ENCODE measurements at regions of chr18 and their contacts with region 1.

Region 1: GRCh38 chr18:59402432-59403090 is 43.5 kb upstream of the LMAN1 start:
- DNase-seq: peak; percentile 85
- H3K4me3 Mint-ChIP-seq: no peak overlapping the region
- H3K27ac Mint-ChIP-seq: no peak overlapping the region
- H3K4me1 Mint-ChIP-seq: no peaks in the 10 kb centered on the region
- H3K27me3 Mint-ChIP-seq: peaks cover 3% of the 10 kb centered on the region

Region 2: GRCh38 chr18:59220784-59221765 is 181.5 kb before region 1 on chr18:
- CTCF ChIA-PET with region 1: no interaction called
- POLR2A ChIA-PET with region 1: no interaction called
- intact Hi-C with region 1: no loop called
- DNase-seq: no peak
- H3K4me3 Mint-ChIP-seq: no peak overlapping the region
- H3K27ac Mint-ChIP-seq: no peak overlapping the region
- H3K4me1 Mint-ChIP-seq: peaks cover 12% of the 10 kb centered on the region
- H3K27me3 Mint-ChIP-seq: peaks cover 57% of the 10 kb centered on the region

Region 3: GRCh38 chr18:59249205-59249774 is 153.3 kb before region 1 on chr18:
- CTCF ChIA-PET with region 1: interaction called, 99 read pairs
- POLR2A ChIA-PET with region 1: no interaction called
- intact Hi-C with region 1: loop called (anchors 2 kb)
- DNase-seq: peak; percentile 54
- H3K4me3 Mint-ChIP-seq: no peak overlapping the region
- H3K27ac Mint-ChIP-seq: no peak overlapping the region
- H3K4me1 Mint-ChIP-seq: no peaks in the 10 kb centered on the region
- H3K27me3 Mint-ChIP-seq: peaks cover 34% of the 10 kb centered on the region

Region 4: DNA sequence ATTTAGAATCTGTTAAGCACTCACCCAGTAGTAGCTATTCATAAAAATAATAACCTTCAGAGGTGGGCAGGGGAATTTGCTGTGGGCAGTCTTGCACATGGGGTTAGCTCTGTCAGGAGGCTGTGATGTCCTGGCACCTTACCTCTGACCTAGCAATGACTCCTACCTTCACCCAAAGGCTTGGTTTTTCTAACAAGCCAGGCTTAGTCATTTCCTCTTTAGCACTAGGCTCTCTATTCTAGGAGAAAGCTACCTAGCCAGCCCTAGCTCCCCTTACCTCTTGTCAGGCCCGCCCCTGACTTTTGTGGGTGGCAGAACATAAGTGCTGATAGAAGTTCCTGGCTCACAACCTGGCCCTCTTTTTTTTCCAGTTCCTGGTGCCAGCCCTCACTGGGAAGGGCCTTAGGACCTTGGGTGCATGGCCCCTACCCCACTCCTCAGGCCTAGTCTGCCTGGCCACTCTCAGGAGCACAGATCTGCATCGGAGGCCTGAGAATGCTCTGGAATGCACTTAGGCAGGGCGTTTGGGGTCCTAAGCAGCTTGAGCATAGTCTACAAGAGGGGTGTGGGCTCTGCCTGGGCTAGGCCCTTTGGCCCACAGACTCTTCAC is 101.8 kb before region 1 on chr18:
- CTCF ChIA-PET with region 1: interaction called, 201 read pairs
- POLR2A ChIA-PET with region 1: no interaction called
- intact Hi-C with region 1: no loop called
- DNase-seq: peak; percentile 18
- H3K4me3 Mint-ChIP-seq: no peak overlapping the region
- H3K27ac Mint-ChIP-seq: no peak overlapping the region
- H3K4me1 Mint-ChIP-seq: no peaks in the 10 kb centered on the region
- H3K27me3 Mint-ChIP-seq: peaks cover 10% of the 10 kb centered on the region

Region 5: DNA sequence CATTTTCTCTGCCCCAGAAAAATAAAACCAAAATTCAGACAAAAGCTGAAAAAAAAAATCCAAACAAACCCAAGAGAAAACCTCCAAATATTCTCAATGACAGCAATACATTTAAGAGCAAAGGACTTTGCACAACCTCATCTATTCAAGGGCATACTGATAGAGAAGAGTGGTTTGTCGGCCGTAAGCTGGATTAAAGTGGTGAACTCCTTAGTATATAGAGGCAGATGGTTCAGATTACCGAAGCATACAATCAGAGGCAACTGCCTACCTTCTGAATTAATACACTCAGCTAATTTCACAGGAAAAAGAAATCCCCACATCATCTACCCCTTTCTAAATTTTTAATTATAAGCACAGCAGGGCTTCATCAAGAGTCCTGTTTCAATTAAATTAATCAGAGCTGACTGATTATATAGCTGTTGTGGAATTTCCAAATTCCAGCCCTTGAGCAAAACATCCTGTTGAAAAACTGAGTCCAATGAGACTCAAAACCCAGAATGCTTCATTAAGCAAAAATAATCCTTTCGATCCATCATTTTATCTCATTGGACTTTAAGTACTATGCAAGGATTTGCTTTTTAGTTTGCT is 84.0 kb before region 1 on chr18 and contains the start of gene CPLX4:
- CTCF ChIA-PET with region 1: interaction called, 201 read pairs
- POLR2A ChIA-PET with region 1: no interaction called
- intact Hi-C with region 1: no loop called
- DNase-seq: no peak
- H3K4me3 Mint-ChIP-seq: no peak within 1 kb of the TSS
- H3K27ac Mint-ChIP-seq: no peak within 1 kb of the TSS
- H3K4me1 Mint-ChIP-seq: no peaks in the 10 kb centered on the region
- H3K27me3 Mint-ChIP-seq: peaks cover 2% of the 10 kb centered on the region
- total RNA-seq, gene CPLX4: not detected

Region 6: GRCh38 chr18:59358712-59359575 is 43.6 kb before region 1 on chr18 and contains the start of gene LMAN1:
- CTCF ChIA-PET with region 1: interaction called, 32 read pairs
- POLR2A ChIA-PET with region 1: interaction called, 6 read pairs
- intact Hi-C with region 1: loop called (anchors 2 kb)
- DNase-seq: peak; percentile 97
- H3K4me3 Mint-ChIP-seq: peak within 1 kb of the TSS; percentile 83
- H3K27ac Mint-ChIP-seq: peak within 1 kb of the TSS; percentile 94
- H3K4me1 Mint-ChIP-seq: peaks cover 26% of the 10 kb centered on the region
- H3K27me3 Mint-ChIP-seq: no peaks in the 10 kb centered on the region
- total RNA-seq, gene LMAN1: 155 to 158 TPM

Region 7: GRCh38 chr18:59502274-59503175 is 100.0 kb after region 1 on chr18:
- CTCF ChIA-PET with region 1: no interaction called
- POLR2A ChIA-PET with region 1: no interaction called
- intact Hi-C with region 1: no loop called
- DNase-seq: no peak
- H3K4me3 Mint-ChIP-seq: no peak overlapping the region
- H3K27ac Mint-ChIP-seq: no peak overlapping the region
- H3K4me1 Mint-ChIP-seq: no peaks in the 10 kb centered on the region
- H3K27me3 Mint-ChIP-seq: peaks cover 6% of the 10 kb centered on the region

Region 8: GRCh38 chr18:59540780-59541179 is 138.2 kb after region 1 on chr18:
- CTCF ChIA-PET with region 1: no interaction called
- POLR2A ChIA-PET with region 1: no interaction called
- intact Hi-C with region 1: no loop called
- DNase-seq: no peak
- H3K4me3 Mint-ChIP-seq: no peak overlapping the region
- H3K27ac Mint-ChIP-seq: no peak overlapping the region
- H3K4me1 Mint-ChIP-seq: no peaks in the 10 kb centered on the region
- H3K27me3 Mint-ChIP-seq: peaks cover 4% of the 10 kb centered on the region

Measured in activated CD4-positive, alpha-beta memory T cell treated with anti-CD3 and anti-CD28 coated beads for 36 hours (primary cell).